ENCODE measurements at regions of chr1 and their contacts with region 1.

Region 1: DNA sequence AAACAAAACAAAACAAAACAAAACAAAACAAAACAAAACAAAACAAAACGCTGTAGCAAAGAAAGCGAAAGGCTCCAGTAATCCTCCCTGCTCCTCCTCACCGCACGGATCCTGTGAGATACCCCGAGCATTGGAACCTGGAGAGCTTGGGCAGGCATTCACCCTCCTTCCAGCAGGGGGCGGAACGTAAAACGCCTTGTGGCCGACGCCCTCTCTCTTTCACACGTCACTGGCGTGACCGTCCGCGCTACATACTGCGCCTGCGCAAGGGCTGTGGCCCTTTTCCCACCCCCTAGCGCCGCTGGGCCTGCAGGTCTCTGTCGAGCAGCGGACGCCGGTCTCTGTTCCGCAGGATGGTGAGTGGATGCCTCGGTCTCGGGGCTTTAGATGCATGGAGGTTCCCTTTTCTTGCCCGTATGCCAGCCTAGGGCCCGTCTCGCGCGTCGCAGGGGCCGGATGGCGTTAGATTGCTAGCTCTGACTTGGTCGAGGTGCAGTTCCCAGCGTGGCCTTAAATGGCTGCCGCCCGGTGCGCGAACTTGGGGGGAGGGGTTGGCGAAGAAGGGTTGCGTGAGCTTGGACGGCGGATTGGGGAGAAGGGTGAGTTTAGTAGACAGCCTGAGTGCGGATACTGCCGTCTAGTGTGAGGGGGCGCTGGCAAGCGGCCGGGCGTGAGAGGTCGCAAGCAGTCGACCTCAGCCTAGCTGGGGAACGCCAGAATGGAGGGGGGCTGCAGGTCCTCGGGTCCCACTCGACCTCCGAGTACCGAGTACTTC is at the start of gene RPL5:
- DNase-seq: peak; percentile 93 to 97
- H3K4me3 ChIP-seq: peak within 1 kb of the TSS; percentile 85
- H3K27ac ChIP-seq: peak within 1 kb of the TSS; percentile 92
- H3K4me1 ChIP-seq: peaks cover 42% of the 10 kb centered on the region
- H3K27me3 ChIP-seq: no peaks in the 10 kb centered on the region
- CTCF ChIP-seq: peak; percentile 99
- total RNA-seq, gene RPL5: 1,021 and 1,050 TPM in 2 replicates

Region 2: GRCh38 chr1:92298573-92299476 is 533.1 kb before region 1 on chr1 and contains the starts of genes GLMN and RPAP2:
- CTCF ChIA-PET with region 1: no interaction called
- POLR2A ChIA-PET with region 1: no interaction called
- intact Hi-C with region 1: loop called (anchors 10 kb)
- DNase-seq: peak; percentile 73 to 78
- H3K4me3 ChIP-seq: peak within 1 kb of the TSS; percentile 86
- H3K27ac ChIP-seq: peak within 1 kb of the TSS; percentile 66
- H3K4me1 ChIP-seq: peaks cover 24% of the 10 kb centered on the region
- H3K27me3 ChIP-seq: no peaks in the 10 kb centered on the region
- CTCF ChIP-seq: no peak; the same call in none of the 2 replicates
- total RNA-seq, gene GLMN: 7.4 and 8.0 TPM in 2 replicates
- total RNA-seq, gene RPAP2: 14.0 and 20.3 TPM in 2 replicates

Region 3: GRCh38 chr1:92784639-92785500 is 47.1 kb before region 1 on chr1 and contains the start of gene EVI5:
- CTCF ChIA-PET with region 1: interaction called, 4 read pairs
- POLR2A ChIA-PET with region 1: interaction called, 4 read pairs
- intact Hi-C with region 1: loop called (anchors 1 kb)
- DNase-seq: peak; percentile 94 to 95
- H3K4me3 ChIP-seq: peak within 1 kb of the TSS; percentile 94
- H3K27ac ChIP-seq: peak within 1 kb of the TSS; percentile 57
- H3K4me1 ChIP-seq: peaks cover 26% of the 10 kb centered on the region
- H3K27me3 ChIP-seq: no peaks in the 10 kb centered on the region
- CTCF ChIP-seq: no peak
- total RNA-seq, gene EVI5: 32.0 and 33.9 TPM in 2 replicates

Region 4: DNA sequence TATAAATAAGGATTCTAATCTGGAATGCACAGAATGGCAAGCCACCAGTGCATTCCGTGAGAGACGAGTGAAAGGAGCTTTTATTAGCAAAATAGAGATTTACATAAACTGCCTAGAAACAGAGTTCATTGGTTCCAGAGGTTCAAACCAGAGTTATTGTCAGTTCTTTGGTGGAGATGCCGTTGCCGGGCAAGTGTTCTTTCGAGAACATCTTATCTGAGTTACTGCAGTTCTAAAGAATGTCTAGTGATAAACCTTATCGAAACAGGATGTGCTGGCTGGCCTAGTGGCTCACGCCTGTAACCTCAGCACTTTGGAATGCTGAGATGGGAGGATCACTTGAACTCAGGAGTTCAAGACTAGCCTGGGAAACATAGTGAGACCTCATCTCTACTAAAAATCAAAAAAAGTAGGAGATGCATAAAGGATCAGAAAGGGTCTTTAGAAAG is 27.2 kb before region 1 on chr1:
- CTCF ChIA-PET with region 1: no interaction called
- POLR2A ChIA-PET with region 1: interaction called, 13 read pairs
- intact Hi-C with region 1: no loop called
- DNase-seq: peak; percentile 74 to 94
- H3K4me3 ChIP-seq: no peak overlapping the region
- H3K27ac ChIP-seq: peak overlapping the region; percentile 33
- H3K4me1 ChIP-seq: peaks cover 18% of the 10 kb centered on the region
- H3K27me3 ChIP-seq: no peaks in the 10 kb centered on the region
- CTCF ChIP-seq: no peak